ENCODE measurements at regions of chr20 and their contacts with region 1.

Region 1: GRCh38 chr20:20395087-20395486 is 27.2 kb downstream of the INSM1 start:
- DNase-seq: no peak
- H3K4me3 ChIP-seq: no peak overlapping the region
- H3K27ac ChIP-seq: no peak overlapping the region
- H3K4me1 ChIP-seq: no peaks in the 10 kb centered on the region
- H3K27me3 ChIP-seq: no peaks in the 10 kb centered on the region
- CTCF ChIP-seq: no peak

Region 2: DNA sequence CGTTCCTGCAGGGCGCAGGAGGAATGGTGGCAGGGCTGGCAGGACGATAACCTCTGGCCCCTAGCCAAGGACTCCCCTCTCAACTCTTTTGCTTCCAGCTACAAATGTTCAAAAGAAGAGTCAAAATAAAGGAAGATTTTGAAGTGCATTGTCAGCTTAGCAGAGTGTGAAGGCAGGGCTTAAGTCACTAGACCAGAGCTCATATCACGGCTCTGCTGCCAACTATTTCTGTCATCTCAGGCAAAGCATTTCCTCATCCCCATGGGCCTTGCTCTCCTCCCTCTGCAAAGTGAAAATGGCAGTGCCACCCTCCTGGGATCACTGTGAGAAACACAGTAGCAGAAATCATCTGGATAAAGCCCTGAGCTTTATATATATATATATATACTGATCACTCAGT is 306.1 kb before region 1 on chr20:
- CTCF ChIA-PET with region 1: no interaction called
- POLR2A ChIA-PET with region 1: interaction called, 26 read pairs
- intact Hi-C with region 1: no loop called
- DNase-seq: no peak
- H3K4me3 ChIP-seq: no peak overlapping the region
- H3K27ac ChIP-seq: no peak overlapping the region
- H3K4me1 ChIP-seq: no peaks in the 10 kb centered on the region
- H3K27me3 ChIP-seq: peaks cover 30% of the 10 kb centered on the region
- CTCF ChIP-seq: no peak

Region 3: DNA sequence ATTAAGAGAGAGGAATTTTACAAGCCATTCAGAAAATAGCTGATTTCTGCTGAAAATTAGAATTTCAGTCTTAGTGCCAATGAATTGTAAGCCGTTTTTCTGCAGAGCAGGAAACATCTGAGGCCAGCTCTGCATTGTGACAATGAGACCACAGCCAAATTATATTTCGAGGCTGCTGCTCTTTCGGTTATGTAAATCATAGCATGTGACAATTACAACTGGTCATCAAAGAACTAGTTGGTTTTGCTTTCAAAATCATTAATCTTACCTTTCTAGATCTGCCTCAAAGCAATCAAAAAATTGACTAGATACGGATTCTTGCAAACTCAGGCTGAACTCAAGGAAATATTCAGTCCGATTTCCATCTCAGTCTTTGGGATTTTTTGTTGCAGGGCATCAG is 60.6 kb before region 1 on chr20:
- CTCF ChIA-PET with region 1: no interaction called
- POLR2A ChIA-PET with region 1: no interaction called
- intact Hi-C with region 1: no loop called
- DNase-seq: no peak
- H3K4me3 ChIP-seq: no peak overlapping the region
- H3K27ac ChIP-seq: no peak overlapping the region
- H3K4me1 ChIP-seq: no peaks in the 10 kb centered on the region
- H3K27me3 ChIP-seq: peaks cover 70% of the 10 kb centered on the region
- CTCF ChIP-seq: no peak

Measured in PC-9 (cell line).